ENCODE measurements at regions of chr15 and their contacts with region 1.

Region 1: GRCh38 chr15:65509321-65509720 is 8.2 kb downstream of the DPP8 start:
- DNase-seq: no peak
- ATAC-seq: no peak
- H3K4me3 ChIP-seq: no peak overlapping the region
- H3K27ac ChIP-seq: no peak overlapping the region
- H3K4me1 ChIP-seq: peaks cover 3 to 44% (median 25%) of the 10 kb centered on the region in 12 donors
- H3K27me3 ChIP-seq: no peaks in the 10 kb centered on the region
- CTCF ChIP-seq: no peak
- POLR2A ChIP-seq: no peak

Region 2: GRCh38 chr15:65460741-65461347 is 48.5 kb before region 1 on chr15:
- intact Hi-C with region 1: loop called in 1 of 10 experiments (anchors 5 kb)
- DNase-seq: no peak
- ATAC-seq: no peak
- H3K4me3 ChIP-seq: no peak overlapping the region
- H3K27ac ChIP-seq: no peak overlapping the region
- H3K4me1 ChIP-seq: no peaks in the 10 kb centered on the region
- H3K27me3 ChIP-seq: no peaks in the 10 kb centered on the region
- CTCF ChIP-seq: no peak
- POLR2A ChIP-seq: no peak

Measured in heart left ventricle (tissue), 16 donors.